ENCODE measurements at regions of chr7 and their contacts with region 1.

Region 1: GRCh38 chr7:106273009-106273668 is 11.6 kb downstream of the NAMPT start:
- DNase-seq: no peak
- ATAC-seq: no peak
- H3K4me3 ChIP-seq: no peak overlapping the region
- H3K27ac ChIP-seq: no peak overlapping the region
- H3K4me1 ChIP-seq: peaks cover 1% of the 10 kb centered on the region; the same call in 1 of the 2 replicates
- H3K27me3 ChIP-seq: no peaks in the 10 kb centered on the region
- CTCF ChIP-seq: no peak
- POLR2A ChIP-seq: no peak; the same call in 1 of the 2 replicates
- RAD21 ChIP-seq: no peak

Region 2: DNA sequence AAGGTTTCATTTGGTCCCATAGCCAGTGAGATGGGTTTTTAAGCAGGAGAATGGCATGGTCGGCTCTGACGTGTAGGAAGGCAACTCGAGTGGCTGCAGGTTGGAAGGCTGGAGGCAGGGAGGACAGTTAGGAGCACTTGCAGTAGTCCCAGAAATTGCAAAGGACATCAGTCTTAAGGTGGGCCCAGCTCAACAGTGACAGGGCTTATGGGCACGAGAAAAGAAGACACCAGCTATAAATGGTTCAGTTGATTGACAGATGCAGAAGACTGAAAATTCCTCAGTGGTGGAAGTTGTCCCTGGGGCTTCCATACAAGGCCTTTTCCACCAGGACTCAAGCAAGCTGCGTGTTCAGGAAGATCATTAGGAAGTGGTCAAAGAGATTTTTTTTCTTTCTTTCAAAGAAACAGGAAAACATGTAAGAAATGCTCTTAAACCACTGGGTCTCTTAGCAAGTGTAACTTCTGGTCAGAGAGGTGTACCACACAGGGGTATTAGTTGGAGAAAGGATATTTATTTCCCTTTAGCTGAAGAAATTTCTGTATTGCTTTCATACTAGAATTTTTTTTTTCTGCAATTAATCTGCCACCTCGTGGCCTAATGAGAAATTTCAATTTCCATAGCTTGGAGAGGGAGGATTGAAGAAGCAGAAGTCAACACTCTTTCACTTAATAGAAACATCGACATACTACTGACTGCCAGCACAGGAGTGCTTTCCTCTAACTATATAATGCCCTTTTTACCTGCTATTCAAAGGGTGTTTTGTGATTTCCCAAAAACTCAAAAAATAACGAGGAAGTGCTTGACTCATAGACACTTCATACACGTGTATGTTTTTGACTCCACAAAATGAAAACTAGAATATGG is 189.1 kb after region 1 on chr7:
- CTCF ChIA-PET with region 1: interaction called, 3 read pairs
- POLR2A ChIA-PET with region 1: no interaction called
- dilution Hi-C with region 1: no loop called
- in situ Hi-C with region 1: loop called (anchors 10 kb)
- intact Hi-C with region 1: no loop called
- DNase-seq: peak; percentile 52
- ATAC-seq: peak; percentile 64
- H3K4me3 ChIP-seq: no peak overlapping the region
- H3K27ac ChIP-seq: no peak overlapping the region
- H3K4me1 ChIP-seq: no peaks in the 10 kb centered on the region
- H3K27me3 ChIP-seq: no peaks in the 10 kb centered on the region
- CTCF ChIP-seq: peak; percentile 60
- POLR2A ChIP-seq: no peak
- RAD21 ChIP-seq: peak; percentile 61